CD8-positive, alpha-beta T cell (primary cell): ENCODE measurements at regions of chr2 and their contacts with region 1.

Region 1: DNA sequence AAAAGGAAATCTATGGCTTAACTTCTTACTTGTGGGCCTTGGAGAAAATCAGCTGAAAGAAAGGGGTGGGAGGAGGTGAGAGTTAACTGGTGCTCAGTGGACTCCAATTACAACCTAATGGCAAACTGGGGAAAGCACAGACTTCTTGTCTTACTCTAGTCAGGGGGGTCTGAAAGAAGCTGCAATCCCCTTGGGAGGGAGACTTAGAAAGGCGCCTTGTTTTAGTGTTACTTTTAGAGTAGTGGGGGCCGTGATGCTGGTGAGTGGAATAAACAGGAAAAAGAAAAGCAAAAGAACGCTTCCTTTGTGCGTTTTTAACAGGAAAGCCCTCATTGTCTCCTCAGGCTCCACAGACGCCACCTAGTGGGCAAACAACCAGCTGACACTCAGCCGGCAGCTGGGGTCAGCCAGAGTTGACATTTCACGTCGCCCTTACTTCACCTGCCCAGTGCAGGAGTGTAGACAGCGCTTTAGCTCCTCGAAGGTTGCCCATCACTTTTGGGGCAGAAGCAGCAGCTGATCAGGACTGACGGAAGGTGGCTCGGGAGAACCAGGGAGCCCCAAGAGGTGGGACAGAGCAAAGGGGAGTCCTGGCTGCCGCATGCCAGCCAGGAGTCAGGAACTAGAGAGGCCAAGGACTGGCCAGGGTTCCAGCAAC is 55.9 kb upstream of the GORASP2 start:
- DNase-seq: peak; percentile 46 to 83 (median 72)
- ATAC-seq: peak; percentile 92
- H3K4me3 ChIP-seq: peak overlapping the region; percentile 32 to 48
- H3K4me3 Mint-ChIP-seq: peak overlapping the region; percentile 75
- H3K27ac ChIP-seq: no peak overlapping the region
- H3K27ac Mint-ChIP-seq: peak overlapping the region; percentile 53
- H3K4me1 ChIP-seq: peaks cover 10% of the 10 kb centered on the region
- H3K4me1 Mint-ChIP-seq: peaks cover 15% of the 10 kb centered on the region
- H3K27me3 ChIP-seq: no peaks in the 10 kb centered on the region
- H3K27me3 Mint-ChIP-seq: peaks cover 5% of the 10 kb centered on the region
- CTCF ChIP-seq: peak; percentile 80

Region 2: GRCh38 chr2:170324640-170325046 is 548.5 kb before region 1 on chr2:
- CTCF ChIA-PET with region 1: interaction called, 3 read pairs
- POLR2A ChIA-PET with region 1: no interaction called
- intact Hi-C with region 1: loop called in 1 of 2 experiments (anchors 2 kb)
- DNase-seq: peak in 5 of 9 experiments; percentile 15 to 57 (median 37)
- ATAC-seq: no peak
- H3K4me3 ChIP-seq: no peak overlapping the region
- H3K4me3 Mint-ChIP-seq: no peak overlapping the region
- H3K27ac ChIP-seq: no peak overlapping the region
- H3K27ac Mint-ChIP-seq: no peak overlapping the region
- H3K4me1 ChIP-seq: no peaks in the 10 kb centered on the region
- H3K4me1 Mint-ChIP-seq: no peaks in the 10 kb centered on the region
- H3K27me3 ChIP-seq: no peaks in the 10 kb centered on the region
- H3K27me3 Mint-ChIP-seq: peaks cover 2% of the 10 kb centered on the region
- CTCF ChIP-seq: peak; percentile 46

Region 3: DNA sequence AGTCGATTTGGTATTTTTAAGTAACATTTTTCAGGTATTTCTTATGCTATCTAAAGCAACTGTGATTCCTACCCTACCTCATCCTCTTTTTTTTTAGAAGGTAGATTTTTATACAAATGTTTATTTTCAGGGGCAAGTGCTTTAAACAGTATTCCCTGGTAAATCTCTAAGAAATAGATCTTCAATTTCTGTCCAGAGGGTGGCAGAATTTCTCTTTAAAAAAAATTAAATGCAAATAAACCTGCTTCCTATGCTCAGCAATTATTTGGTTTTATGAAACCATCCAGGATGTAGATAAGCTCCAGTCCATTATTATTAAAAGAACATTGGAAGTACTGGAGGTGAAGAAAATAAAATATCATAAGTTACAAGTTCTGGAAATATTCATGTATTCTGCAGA is 503.3 kb before region 1 on chr2:
- CTCF ChIA-PET with region 1: no interaction called
- POLR2A ChIA-PET with region 1: no interaction called
- intact Hi-C with region 1: loop called in 1 of 2 experiments (anchors 5 kb)
- DNase-seq: peak in 2 of 9 experiments; percentile 9 to 28
- ATAC-seq: no peak
- H3K4me3 ChIP-seq: no peak overlapping the region
- H3K4me3 Mint-ChIP-seq: no peak overlapping the region
- H3K27ac ChIP-seq: no peak overlapping the region
- H3K27ac Mint-ChIP-seq: no peak overlapping the region
- H3K4me1 ChIP-seq: peaks cover 13% of the 10 kb centered on the region
- H3K4me1 Mint-ChIP-seq: peaks cover 26% of the 10 kb centered on the region
- H3K27me3 ChIP-seq: peaks cover 0 to 4% of the 10 kb centered on the region in 2 experiments
- H3K27me3 Mint-ChIP-seq: peaks cover 52% of the 10 kb centered on the region
- CTCF ChIP-seq: no peak

Region 4: DNA sequence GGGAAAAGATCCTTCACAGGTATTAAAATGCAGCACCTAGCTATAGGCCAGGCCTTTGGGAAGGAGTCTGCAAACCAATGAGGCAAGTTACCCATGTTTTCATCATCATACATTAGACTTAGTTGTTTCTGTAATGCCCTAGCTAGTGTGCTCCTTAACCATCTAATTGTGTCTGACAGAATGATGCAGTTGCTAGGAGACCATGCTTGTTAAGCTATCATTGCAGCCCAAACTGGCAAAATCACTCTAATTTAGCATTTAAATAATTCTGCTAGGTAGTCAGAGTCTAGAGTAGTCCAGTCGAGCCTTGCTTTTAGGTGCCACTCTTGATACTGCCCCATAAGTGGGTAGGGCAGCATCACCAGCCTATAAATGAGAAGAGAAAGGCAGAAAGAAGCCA is 21.5 kb before region 1 on chr2:
- CTCF ChIA-PET with region 1: interaction called, 12 read pairs
- POLR2A ChIA-PET with region 1: no interaction called
- intact Hi-C with region 1: no loop called
- DNase-seq: no peak
- ATAC-seq: no peak
- H3K4me3 ChIP-seq: no peak overlapping the region
- H3K4me3 Mint-ChIP-seq: no peak overlapping the region
- H3K27ac ChIP-seq: no peak overlapping the region
- H3K27ac Mint-ChIP-seq: no peak overlapping the region
- H3K4me1 ChIP-seq: no peaks in the 10 kb centered on the region
- H3K4me1 Mint-ChIP-seq: no peaks in the 10 kb centered on the region
- H3K27me3 ChIP-seq: no peaks in the 10 kb centered on the region
- H3K27me3 Mint-ChIP-seq: no peaks in the 10 kb centered on the region
- CTCF ChIP-seq: no peak

Region 5: GRCh38 chr2:170886386-170886785 is 13.2 kb after region 1 on chr2:
- CTCF ChIA-PET with region 1: interaction called, 49 read pairs
- POLR2A ChIA-PET with region 1: interaction called, 3 read pairs
- intact Hi-C with region 1: no loop called
- DNase-seq: no peak
- ATAC-seq: no peak
- H3K4me3 ChIP-seq: no peak overlapping the region
- H3K4me3 Mint-ChIP-seq: no peak overlapping the region
- H3K27ac ChIP-seq: no peak overlapping the region
- H3K27ac Mint-ChIP-seq: no peak overlapping the region
- H3K4me1 ChIP-seq: no peaks in the 10 kb centered on the region
- H3K4me1 Mint-ChIP-seq: no peaks in the 10 kb centered on the region
- H3K27me3 ChIP-seq: no peaks in the 10 kb centered on the region
- H3K27me3 Mint-ChIP-seq: peaks cover 9% of the 10 kb centered on the region
- CTCF ChIP-seq: no peak

Region 6: DNA sequence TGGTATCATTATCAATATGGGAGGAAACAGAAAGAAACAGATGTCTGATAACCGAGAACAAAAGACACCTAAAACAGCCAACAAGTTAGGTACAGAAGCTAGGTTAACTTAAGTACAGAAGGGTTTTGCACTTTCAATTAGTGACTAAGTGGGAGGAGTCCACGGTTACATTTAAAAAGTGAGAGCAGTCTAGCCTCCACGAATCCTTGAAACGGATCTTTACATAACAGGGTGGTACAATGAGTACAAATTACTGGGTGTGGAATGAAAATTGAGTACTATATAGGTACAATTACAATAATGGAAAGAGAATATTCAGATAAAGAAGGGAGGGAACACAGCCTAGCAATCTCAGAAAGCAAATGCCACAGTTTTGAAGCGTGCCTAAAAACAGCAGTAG is 211.0 kb after region 1 on chr2:
- CTCF ChIA-PET with region 1: no interaction called
- POLR2A ChIA-PET with region 1: no interaction called
- intact Hi-C with region 1: no loop called
- DNase-seq: peak in 2 of 9 experiments; percentile 15 to 54
- ATAC-seq: peak; percentile 51
- H3K4me3 ChIP-seq: no peak overlapping the region
- H3K4me3 Mint-ChIP-seq: peak overlapping the region; percentile 61
- H3K27ac ChIP-seq: peak overlapping the region; percentile 7 to 11
- H3K27ac Mint-ChIP-seq: peak overlapping the region; percentile 88
- H3K4me1 ChIP-seq: peaks cover 63% of the 10 kb centered on the region
- H3K4me1 Mint-ChIP-seq: peaks cover 69% of the 10 kb centered on the region
- H3K27me3 ChIP-seq: no peaks in the 10 kb centered on the region
- H3K27me3 Mint-ChIP-seq: no peaks in the 10 kb centered on the region
- CTCF ChIP-seq: no peak

Region 7: DNA sequence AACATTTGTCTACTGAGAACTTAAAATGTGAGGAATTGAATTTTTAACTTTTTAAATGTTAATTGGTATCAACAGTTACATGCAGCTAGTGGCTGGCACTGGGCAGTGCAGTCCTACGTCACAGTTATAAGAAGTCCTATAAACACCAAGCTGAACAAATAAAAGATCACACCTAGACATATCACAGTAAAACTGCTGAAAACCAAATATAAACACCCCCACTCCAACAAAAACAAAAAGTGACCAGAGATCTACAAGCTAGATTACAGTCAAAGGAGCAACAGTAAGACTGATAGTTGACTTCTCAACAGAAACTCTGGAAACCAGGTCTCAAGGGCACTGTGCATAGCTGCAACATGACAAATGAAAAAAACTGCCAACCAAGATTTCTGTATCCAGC is 268.2 kb after region 1 on chr2:
- CTCF ChIA-PET with region 1: no interaction called
- POLR2A ChIA-PET with region 1: no interaction called
- intact Hi-C with region 1: no loop called
- DNase-seq: no peak
- ATAC-seq: no peak
- H3K4me3 ChIP-seq: no peak overlapping the region
- H3K4me3 Mint-ChIP-seq: no peak overlapping the region
- H3K27ac ChIP-seq: no peak overlapping the region
- H3K27ac Mint-ChIP-seq: no peak overlapping the region
- H3K4me1 ChIP-seq: peaks cover 29% of the 10 kb centered on the region
- H3K4me1 Mint-ChIP-seq: peaks cover 83% of the 10 kb centered on the region
- H3K27me3 ChIP-seq: no peaks in the 10 kb centered on the region
- H3K27me3 Mint-ChIP-seq: no peaks in the 10 kb centered on the region
- CTCF ChIP-seq: no peak